Aorta (tissue), 5 donors: ENCODE measurements at regions of chr20 and their contacts with region 1.

Region 1: DNA sequence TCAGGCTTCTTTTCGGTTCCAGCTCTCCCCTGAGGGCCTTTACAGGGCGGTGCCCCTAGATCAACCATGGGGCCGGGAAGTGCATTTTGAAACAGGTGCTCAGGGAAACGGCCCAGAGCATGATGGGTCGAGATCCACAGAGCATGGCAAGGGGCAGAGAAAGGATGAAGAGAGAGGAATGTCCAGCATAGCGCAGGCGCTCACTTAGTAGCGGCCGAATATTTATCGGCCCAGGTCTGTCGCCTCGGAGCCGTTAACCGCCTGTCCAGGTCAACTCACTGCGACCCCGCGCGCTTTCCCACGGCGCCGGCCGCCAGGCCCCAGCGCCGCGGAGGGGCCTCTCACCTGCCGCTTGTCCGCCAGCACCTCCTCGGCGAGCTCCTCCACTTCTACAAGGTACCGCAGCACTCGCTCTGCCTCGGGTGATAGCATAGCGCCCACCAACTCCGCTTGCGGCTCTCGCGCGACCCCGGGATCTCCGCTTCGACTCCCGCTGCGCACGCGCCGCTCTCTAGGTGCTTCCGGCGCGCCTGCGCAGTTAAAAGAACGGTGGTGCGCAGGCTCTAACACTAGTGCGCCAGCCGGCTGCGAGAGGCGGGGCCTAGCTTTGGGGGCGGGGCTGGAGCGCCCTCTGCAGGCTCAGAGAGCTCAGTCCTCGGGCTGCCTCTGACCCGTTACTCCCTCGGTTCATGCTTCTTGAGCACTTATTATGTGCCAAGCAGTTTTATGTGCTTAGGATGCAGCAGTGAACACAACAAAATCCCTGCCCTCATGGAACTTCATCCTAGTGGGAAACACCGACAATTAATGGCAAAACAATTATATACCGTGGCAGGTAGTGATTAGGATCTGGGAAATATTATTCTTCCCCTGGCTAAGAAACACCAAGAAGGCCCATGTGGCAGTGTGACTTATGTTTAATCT is at the start of gene PDRG1:
- DNase-seq: peak; percentile 96 to 99
- ATAC-seq: peak; percentile 99
- H3K4me3 ChIP-seq: peak within 1 kb of the TSS; percentile 61 to 82
- H3K27ac ChIP-seq: peak within 1 kb of the TSS in 1 of 2 donors; percentile 19
- H3K4me1 ChIP-seq: no peaks in the 10 kb centered on the region
- H3K27me3 ChIP-seq: no peaks in the 10 kb centered on the region
- total RNA-seq, gene PDRG1: 5.6 to 8.6 TPM

Region 2: GRCh38 chr20:31849455-31849925 is 102.3 kb before region 1 on chr20:
- intact Hi-C with region 1: loop called (anchors 1 to 5 kb)
- DNase-seq: no peak
- ATAC-seq: no peak
- H3K4me3 ChIP-seq: no peak overlapping the region
- H3K27ac ChIP-seq: no peak overlapping the region
- H3K4me1 ChIP-seq: no peaks in the 10 kb centered on the region
- H3K27me3 ChIP-seq: no peaks in the 10 kb centered on the region

Region 3: DNA sequence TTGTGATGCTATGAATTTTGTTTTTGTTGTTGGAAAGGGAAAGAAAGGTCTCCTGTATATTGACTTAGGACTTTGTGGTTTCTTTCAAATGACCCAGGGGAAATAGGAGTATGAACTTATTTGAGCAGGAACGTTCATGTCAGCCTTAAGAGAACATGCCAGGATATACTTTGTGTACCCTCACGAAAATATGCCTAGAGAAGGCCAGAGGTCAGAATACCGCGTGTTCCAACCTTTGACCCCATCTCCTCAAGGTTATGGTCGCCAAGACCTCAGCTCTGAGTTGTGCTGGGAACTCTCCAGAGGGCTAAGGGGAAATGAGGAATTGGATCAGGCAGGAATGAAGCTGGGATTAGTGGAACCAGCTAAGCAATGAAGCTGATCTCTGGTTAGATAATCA is 69.8 kb before region 1 on chr20:
- intact Hi-C with region 1: loop called in 1 of 2 experiments (anchors 5 kb)
- DNase-seq: no peak
- ATAC-seq: no peak
- H3K4me3 ChIP-seq: no peak overlapping the region
- H3K27ac ChIP-seq: no peak overlapping the region
- H3K4me1 ChIP-seq: no peaks in the 10 kb centered on the region
- H3K27me3 ChIP-seq: no peaks in the 10 kb centered on the region

Region 4: DNA sequence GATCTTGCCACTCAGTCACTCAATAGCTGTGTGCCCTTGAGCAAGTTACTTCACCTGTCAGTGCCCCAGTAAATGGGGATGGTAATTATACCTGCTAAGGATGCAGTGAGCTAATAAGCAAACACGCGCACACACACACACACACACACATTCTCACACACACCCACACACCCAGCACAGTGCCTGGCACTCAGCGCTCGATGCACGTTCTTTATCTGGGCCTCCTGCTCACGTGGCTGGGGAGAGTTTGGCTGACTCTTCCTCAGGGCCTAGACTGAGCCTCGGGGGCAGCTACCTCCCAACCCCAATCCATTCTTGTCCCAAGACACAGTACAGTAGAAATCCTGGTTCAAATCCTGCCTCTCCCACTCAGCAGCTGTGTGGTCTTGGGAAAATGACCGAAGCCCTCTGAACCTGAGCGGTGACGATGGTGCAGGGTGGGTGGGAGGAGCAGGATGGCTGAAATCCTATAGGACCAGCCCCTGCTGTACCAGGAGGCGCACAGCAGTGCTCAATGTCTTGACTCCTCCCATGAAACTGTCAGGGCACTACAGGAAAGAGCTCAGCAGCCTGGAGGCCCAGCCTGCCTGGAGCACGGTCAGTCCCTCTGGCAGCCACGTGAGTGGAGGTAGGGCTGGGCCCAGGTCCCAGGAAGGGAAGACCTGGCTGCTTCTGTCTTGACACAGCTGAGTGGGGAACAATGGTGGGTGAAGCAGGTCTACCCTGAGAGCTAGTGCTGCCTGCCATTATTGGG is 31.5 kb before region 1 on chr20:
- intact Hi-C with region 1: no loop called
- DNase-seq: no peak
- ATAC-seq: no peak
- H3K4me3 ChIP-seq: no peak overlapping the region
- H3K27ac ChIP-seq: no peak overlapping the region
- H3K4me1 ChIP-seq: no peaks in the 10 kb centered on the region
- H3K27me3 ChIP-seq: no peaks in the 10 kb centered on the region

Region 5: GRCh38 chr20:32031007-32031958 is 79.5 kb after region 1 on chr20:
- intact Hi-C with region 1: loop called in 1 of 2 experiments (anchors 10 kb)
- DNase-seq: peak; percentile 86 to 93
- ATAC-seq: peak; percentile 85
- H3K4me3 ChIP-seq: no peak overlapping the region
- H3K27ac ChIP-seq: no peak overlapping the region
- H3K4me1 ChIP-seq: no peaks in the 10 kb centered on the region
- H3K27me3 ChIP-seq: no peaks in the 10 kb centered on the region

Region 6: GRCh38 chr20:32752458-32753250 is 800.9 kb after region 1 on chr20:
- intact Hi-C with region 1: no loop called
- DNase-seq: no peak
- ATAC-seq: no peak
- H3K4me3 ChIP-seq: no peak overlapping the region
- H3K27ac ChIP-seq: no peak overlapping the region
- H3K4me1 ChIP-seq: no peaks in the 10 kb centered on the region
- H3K27me3 ChIP-seq: no peaks in the 10 kb centered on the region